MCF 10A (cell line): ENCODE measurements at regions of chr11 and their contacts with region 1.

Region 1: GRCh38 chr11:64304316-64305072 is 830 bp upstream of the ESRRA start:
- DNase-seq: peak; percentile 92
- H3K4me3 Mint-ChIP-seq: peak overlapping the region; percentile 99
- H3K27ac Mint-ChIP-seq: peak overlapping the region; percentile 83
- H3K4me1 Mint-ChIP-seq: peaks cover 18% of the 10 kb centered on the region
- H3K27me3 Mint-ChIP-seq: no peaks in the 10 kb centered on the region
- CTCF ChIP-seq: peak; percentile 78

Region 2: GRCh38 chr11:64204464-64204989 is 100.0 kb before region 1 on chr11:
- CTCF ChIA-PET with region 1: interaction called, 51 read pairs
- POLR2A ChIA-PET with region 1: interaction called, 6 read pairs
- intact Hi-C with region 1: loop called (anchors 1 kb)
- DNase-seq: peak; percentile 96
- H3K4me3 Mint-ChIP-seq: no peak overlapping the region
- H3K27ac Mint-ChIP-seq: peak overlapping the region; percentile 37
- H3K4me1 Mint-ChIP-seq: peaks cover 12% of the 10 kb centered on the region
- H3K27me3 Mint-ChIP-seq: no peaks in the 10 kb centered on the region
- CTCF ChIP-seq: peak; percentile 83

Region 3: GRCh38 chr11:64252003-64252872 is 52.3 kb before region 1 on chr11:
- CTCF ChIA-PET with region 1: interaction called, 65 read pairs
- POLR2A ChIA-PET with region 1: interaction called, 107 read pairs
- intact Hi-C with region 1: loop called (anchors 2 kb)
- DNase-seq: peak; percentile 69
- H3K4me3 Mint-ChIP-seq: peak overlapping the region; percentile 87
- H3K27ac Mint-ChIP-seq: peak overlapping the region; percentile 89
- H3K4me1 Mint-ChIP-seq: peaks cover 6% of the 10 kb centered on the region
- H3K27me3 Mint-ChIP-seq: no peaks in the 10 kb centered on the region
- CTCF ChIP-seq: no peak

Region 4: DNA sequence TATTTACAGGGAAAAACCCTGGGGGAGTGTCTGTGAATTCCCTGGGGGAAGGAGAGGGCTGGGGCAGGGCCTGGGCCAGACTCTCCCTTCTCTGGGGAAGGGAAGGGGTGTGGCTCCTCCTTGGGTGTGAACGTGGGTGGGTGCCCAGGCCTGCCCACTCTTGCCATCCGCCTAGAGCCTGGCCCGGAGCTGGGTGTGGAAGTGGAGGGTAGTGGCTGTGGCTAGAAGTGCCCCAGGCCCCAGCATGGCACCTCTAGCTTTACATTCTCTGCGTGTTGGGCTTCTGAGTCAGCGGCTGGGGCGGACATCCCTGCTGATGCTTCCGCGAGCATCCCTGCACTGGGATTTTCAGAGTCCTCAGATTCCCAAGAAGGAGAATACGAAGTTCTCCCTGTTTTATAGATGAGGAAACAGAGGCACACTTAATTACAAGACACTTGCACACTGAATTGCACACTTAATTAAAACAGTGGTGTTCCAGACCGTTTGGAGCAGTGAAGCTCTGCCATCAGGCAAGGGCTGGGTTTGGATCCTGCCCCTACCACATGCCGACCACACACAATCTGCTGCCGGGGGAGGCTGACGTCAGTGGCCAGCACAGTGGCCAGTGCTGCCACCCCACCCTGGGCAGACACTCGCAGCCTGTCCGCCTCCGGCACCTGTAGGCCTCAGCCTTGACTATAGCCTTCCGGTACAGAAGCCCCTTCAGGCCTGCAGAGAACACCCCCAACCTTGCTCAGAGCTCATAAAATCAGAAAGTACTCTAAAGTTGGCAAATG is 27.7 kb before region 1 on chr11:
- CTCF ChIA-PET with region 1: interaction called, 96 read pairs
- POLR2A ChIA-PET with region 1: interaction called, 92 read pairs
- intact Hi-C with region 1: no loop called
- DNase-seq: peak; percentile 90
- H3K4me3 Mint-ChIP-seq: peak overlapping the region; percentile 14
- H3K27ac Mint-ChIP-seq: peak overlapping the region; percentile 79
- H3K4me1 Mint-ChIP-seq: peaks cover 4% of the 10 kb centered on the region
- H3K27me3 Mint-ChIP-seq: no peaks in the 10 kb centered on the region
- CTCF ChIP-seq: no peak

Region 5: GRCh38 chr11:64317957-64318693 is 13.6 kb after region 1 on chr11 and contains the start of gene PRDX5:
- CTCF ChIA-PET with region 1: interaction called, 10 read pairs
- POLR2A ChIA-PET with region 1: interaction called, 64 read pairs
- intact Hi-C with region 1: no loop called
- DNase-seq: peak; percentile 96
- H3K4me3 Mint-ChIP-seq: peak within 1 kb of the TSS; percentile 86
- H3K27ac Mint-ChIP-seq: peak within 1 kb of the TSS; percentile 93
- H3K4me1 Mint-ChIP-seq: peaks cover 36% of the 10 kb centered on the region
- H3K27me3 Mint-ChIP-seq: no peaks in the 10 kb centered on the region
- CTCF ChIP-seq: no peak
- total RNA-seq, gene PRDX5: 274 and 302 TPM in 2 replicates

Region 6: DNA sequence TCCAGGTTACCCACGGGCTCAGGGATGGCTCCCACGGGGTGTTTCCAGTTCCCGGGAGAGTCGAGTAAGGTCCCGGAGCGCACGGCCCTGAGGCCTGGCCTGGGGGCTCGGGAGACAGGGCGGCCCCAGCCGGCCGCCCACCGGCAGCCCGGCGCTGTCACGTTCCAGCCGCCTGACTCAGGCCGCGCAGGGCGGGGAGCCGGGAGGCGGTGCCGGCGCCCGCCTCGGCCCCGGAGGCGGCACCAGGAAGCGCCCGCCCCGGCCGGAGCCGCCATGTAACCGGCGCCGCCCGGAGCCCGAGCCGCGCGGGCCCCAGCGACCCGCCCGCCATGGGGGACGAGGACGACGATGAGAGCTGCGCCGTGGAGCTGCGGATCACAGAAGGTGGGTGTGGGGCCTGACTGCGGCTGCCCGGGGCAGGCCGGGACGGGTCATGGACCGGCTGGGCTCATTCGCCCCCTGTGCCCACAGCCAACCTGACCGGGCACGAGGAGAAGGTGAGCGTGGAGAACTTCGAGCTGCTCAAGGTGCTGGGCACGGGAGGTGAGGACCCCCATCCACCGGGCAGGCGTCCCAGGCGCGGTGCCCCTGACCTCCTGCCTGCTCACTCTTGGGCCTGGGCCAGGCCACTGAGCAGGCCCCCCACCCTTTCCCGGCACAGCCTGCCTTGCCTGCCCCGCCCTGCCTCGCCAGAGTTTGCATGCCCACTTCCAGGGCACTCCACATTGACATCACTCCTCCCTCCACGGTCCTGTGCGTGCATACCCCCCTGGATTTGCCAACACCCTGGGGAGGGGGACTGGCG is 54.6 kb after region 1 on chr11 and contains the start of gene RPS6KA4:
- CTCF ChIA-PET with region 1: interaction called, 12 read pairs
- POLR2A ChIA-PET with region 1: interaction called, 9 read pairs
- intact Hi-C with region 1: loop called (anchors 2 kb)
- DNase-seq: peak; percentile 58
- H3K4me3 Mint-ChIP-seq: peak within 1 kb of the TSS; percentile 82
- H3K27ac Mint-ChIP-seq: peak within 1 kb of the TSS; percentile 8
- H3K4me1 Mint-ChIP-seq: peaks cover 35% of the 10 kb centered on the region
- H3K27me3 Mint-ChIP-seq: no peaks in the 10 kb centered on the region
- CTCF ChIP-seq: no peak
- total RNA-seq, gene RPS6KA4: 42.5 and 46.5 TPM in 2 replicates

Region 7: DNA sequence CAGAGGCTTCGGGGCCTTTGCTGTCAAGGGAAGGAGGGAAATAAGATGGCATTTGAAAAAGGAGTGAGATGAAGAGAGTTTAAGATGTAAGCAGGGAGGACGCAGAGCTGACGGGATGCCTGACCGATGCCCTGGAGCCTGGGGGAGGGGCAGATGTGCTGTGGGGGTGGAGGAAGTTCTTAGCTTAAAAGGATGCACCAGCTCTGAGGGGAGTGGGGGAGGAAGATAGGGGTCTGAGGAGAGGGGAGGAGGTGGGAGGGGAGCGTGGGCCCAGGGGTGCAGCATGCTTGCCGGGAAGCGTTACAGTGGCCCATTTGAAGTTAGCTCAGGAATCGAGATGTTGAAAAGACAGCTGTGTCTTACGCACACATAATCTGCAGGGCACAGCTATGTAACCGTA is 110.8 kb after region 1 on chr11:
- CTCF ChIA-PET with region 1: no interaction called
- POLR2A ChIA-PET with region 1: no interaction called
- intact Hi-C with region 1: no loop called
- DNase-seq: no peak
- H3K4me3 Mint-ChIP-seq: no peak overlapping the region
- H3K27ac Mint-ChIP-seq: no peak overlapping the region
- H3K4me1 Mint-ChIP-seq: no peaks in the 10 kb centered on the region
- H3K27me3 Mint-ChIP-seq: peaks cover 27% of the 10 kb centered on the region
- CTCF ChIP-seq: no peak

Region 8: GRCh38 chr11:64854534-64855429 is 550.3 kb after region 1 on chr11:
- CTCF ChIA-PET with region 1: no interaction called
- POLR2A ChIA-PET with region 1: no interaction called
- intact Hi-C with region 1: no loop called
- DNase-seq: peak; percentile 97
- H3K4me3 Mint-ChIP-seq: peak overlapping the region; percentile 54
- H3K27ac Mint-ChIP-seq: peak overlapping the region; percentile 86
- H3K4me1 Mint-ChIP-seq: peaks cover 28% of the 10 kb centered on the region
- H3K27me3 Mint-ChIP-seq: no peaks in the 10 kb centered on the region
- CTCF ChIP-seq: no peak

Region 9: GRCh38 chr11:64935359-64936081 is 631.0 kb after region 1 on chr11 and contains the start of gene GPHA2:
- CTCF ChIA-PET with region 1: no interaction called
- POLR2A ChIA-PET with region 1: no interaction called
- intact Hi-C with region 1: no loop called
- DNase-seq: no peak
- H3K4me3 Mint-ChIP-seq: no peak within 1 kb of the TSS
- H3K27ac Mint-ChIP-seq: no peak within 1 kb of the TSS
- H3K4me1 Mint-ChIP-seq: no peaks in the 10 kb centered on the region
- H3K27me3 Mint-ChIP-seq: no peaks in the 10 kb centered on the region
- CTCF ChIP-seq: no peak
- total RNA-seq, gene GPHA2: not detected in 2 replicates

Region 10: DNA sequence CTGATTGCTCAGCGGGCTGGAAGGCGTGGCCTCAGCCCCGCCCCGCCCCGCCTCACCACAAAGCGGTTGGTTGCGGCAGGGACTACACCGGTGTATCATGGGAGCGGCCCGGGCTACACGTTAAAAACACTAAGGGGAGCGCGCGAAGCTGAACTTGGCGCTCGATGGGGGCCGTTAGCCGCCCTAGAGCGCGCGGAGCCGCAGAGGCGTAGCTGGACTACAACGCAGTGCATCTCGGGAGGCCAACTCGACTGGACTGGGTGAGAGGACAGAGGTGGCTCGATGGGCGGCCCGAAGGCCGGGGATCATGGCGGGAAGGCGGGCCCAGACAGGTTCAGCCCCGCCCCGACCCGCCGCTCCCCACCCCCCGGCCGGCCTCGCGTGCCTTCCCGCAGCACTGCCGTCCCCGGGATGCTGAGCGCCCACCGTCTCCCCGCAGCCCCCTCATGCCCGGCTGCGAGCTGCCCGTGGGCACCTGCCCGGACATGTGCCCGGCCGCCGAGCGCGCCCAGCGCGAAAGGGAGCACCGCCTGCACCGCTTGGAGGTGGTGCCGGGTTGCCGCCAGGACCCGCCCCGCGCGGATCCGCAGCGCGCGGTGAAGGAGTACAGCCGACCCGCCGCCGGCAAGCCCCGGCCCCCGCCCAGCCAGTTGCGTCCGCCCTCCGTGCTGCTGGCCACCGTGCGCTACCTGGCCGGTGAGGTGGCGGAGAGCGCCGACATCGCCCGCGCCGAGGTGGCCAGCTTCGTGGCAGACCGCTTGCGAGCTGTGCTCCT is 736.5 kb after region 1 on chr11 and contains the start of gene SAC3D1:
- CTCF ChIA-PET with region 1: no interaction called
- POLR2A ChIA-PET with region 1: no interaction called
- intact Hi-C with region 1: no loop called
- DNase-seq: peak; percentile 93
- H3K4me3 Mint-ChIP-seq: peak within 1 kb of the TSS; percentile 89
- H3K27ac Mint-ChIP-seq: peak within 1 kb of the TSS; percentile 84
- H3K4me1 Mint-ChIP-seq: peaks cover 10% of the 10 kb centered on the region
- H3K27me3 Mint-ChIP-seq: no peaks in the 10 kb centered on the region
- CTCF ChIP-seq: no peak
- total RNA-seq, gene SAC3D1: 10.3 and 14.0 TPM in 2 replicates